ENCODE measurements at regions of chr11 and their contacts with region 1.

Region 1: GRCh38 chr11:60775420-60775961 is 9.6 kb upstream of the MS4A10 start:
- DNase-seq: peak; percentile 68 to 96 (median 86)

Region 2: DNA sequence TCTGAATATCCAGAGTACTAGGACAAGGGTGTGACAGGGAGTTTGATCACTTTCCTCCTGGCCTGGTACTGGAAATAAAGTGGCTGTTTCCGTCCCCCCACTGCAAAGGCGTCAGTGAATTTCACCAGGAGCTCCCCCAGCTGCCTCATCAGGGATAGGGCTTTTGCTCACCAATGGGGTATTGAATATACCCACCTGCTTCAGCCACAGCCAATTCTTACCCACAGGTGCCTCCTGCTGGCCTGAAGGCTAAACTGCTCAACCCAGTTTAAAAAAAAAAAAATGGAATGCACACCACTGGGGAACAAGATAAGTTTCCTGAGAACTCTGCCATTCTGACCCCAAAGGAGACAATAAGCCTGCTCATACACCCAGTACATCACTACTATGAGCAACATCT is 141.4 kb before region 1 on chr11:
- intact Hi-C with region 1: no loop called
- DNase-seq: no peak

Region 3: DNA sequence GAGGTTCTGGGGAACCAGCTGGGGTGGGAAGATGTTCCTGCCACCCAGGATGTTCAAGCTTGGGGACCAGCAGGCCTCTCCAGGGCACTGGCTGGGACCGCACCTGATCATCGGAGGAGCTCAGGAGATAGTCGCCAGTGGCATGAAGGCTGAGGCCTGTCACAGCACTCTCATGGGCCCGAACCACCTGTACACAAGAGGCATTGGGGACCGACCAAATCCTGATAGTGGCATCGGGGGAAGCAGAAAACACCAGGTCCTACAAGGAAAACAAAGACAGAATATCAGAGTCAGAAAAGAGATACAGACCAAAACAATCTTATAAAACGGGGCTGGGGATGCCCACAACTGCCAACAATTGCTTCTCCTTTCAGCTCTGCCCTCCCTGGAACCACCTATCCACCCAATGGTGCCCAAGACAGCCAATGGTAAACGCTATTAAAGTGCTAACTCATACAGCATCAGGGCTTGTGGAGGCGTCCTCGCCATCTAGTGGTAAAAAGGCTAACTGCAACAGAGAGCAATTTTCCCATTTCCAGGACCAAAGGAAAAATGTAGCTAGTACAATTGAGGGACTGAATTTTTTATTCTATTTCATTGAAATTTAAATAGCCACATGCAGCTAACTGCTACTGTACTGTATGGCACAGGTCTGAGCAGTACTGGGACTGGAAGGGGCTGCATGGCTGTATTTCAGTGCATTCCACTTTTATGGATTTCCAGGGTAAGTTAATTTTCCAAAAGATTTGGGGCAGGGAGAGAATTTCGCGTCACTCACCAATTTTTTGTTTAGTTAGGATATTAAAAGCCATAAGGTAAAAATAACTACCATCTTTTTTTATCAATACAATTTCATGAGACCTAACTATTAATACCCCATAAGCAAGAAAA is 123.8 kb after region 1 on chr11:
- intact Hi-C with region 1: loop called (anchors 10 kb)
- DNase-seq: no peak

Region 4: GRCh38 chr11:61406067-61406466 is 630.6 kb after region 1 on chr11:
- intact Hi-C with region 1: no loop called
- DNase-seq: no peak

Measured in posterior cingulate gyrus (tissue), 11 donors.